ENCODE measurements at regions of chr6 and their contacts with region 1.

Region 1: GRCh38 chr6:43263314-43264178 is 20.3 kb downstream of the TTBK1 start:
- DNase-seq: peak; percentile 48
- H3K4me3 ChIP-seq: no peak overlapping the region
- H3K27ac ChIP-seq: no peak overlapping the region
- H3K4me1 ChIP-seq: no peaks in the 10 kb centered on the region
- H3K27me3 ChIP-seq: peaks cover 4 to 6% of the 10 kb centered on the region in 2 experiments
- CTCF ChIP-seq: peak; percentile 58 to 76
- POLR2A ChIP-seq: no peak

Region 2: GRCh38 chr6:43334466-43335095 is 71.0 kb after region 1 on chr6:
- CTCF ChIA-PET with region 1: interaction called, 49 read pairs
- POLR2A ChIA-PET with region 1: no interaction called
- dilution Hi-C with region 1: no loop called
- intact Hi-C with region 1: loop called (anchors 1 kb)
- DNase-seq: peak; percentile 66
- H3K4me3 ChIP-seq: no peak overlapping the region
- H3K27ac ChIP-seq: no peak overlapping the region
- H3K4me1 ChIP-seq: no peaks in the 10 kb centered on the region
- H3K27me3 ChIP-seq: no peaks in the 10 kb centered on the region
- CTCF ChIP-seq: peak; percentile 45 to 49
- POLR2A ChIP-seq: no peak

Region 3: GRCh38 chr6:43355862-43356590 is 92.5 kb after region 1 on chr6:
- CTCF ChIA-PET with region 1: interaction called, 10 read pairs
- POLR2A ChIA-PET with region 1: no interaction called
- dilution Hi-C with region 1: no loop called
- intact Hi-C with region 1: no loop called
- DNase-seq: peak; percentile 24
- H3K4me3 ChIP-seq: no peak overlapping the region
- H3K27ac ChIP-seq: no peak overlapping the region
- H3K4me1 ChIP-seq: peaks cover 7% of the 10 kb centered on the region
- H3K27me3 ChIP-seq: no peaks in the 10 kb centered on the region
- CTCF ChIP-seq: peak in 1 of 2 donors; percentile 23
- POLR2A ChIP-seq: no peak

Region 4: DNA sequence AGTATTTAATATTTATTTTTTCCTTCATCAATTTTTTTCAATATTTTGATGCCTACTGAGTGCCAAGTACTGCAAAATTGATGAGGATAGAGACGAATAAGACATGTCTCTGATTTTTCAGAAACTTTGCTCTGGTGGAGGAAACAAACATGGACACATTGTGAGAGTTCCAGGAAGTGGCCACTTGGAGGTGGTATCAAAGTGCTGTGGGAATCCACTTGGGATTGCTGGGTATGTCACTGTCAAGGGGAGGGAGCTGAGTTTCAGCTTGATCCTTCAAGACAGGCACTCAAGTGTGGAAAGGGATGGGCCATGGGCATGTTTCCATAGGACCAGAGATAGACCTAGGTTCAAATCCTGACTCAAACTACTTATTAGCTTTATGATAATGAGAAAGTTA is 139.3 kb after region 1 on chr6:
- CTCF ChIA-PET with region 1: interaction called, 36 read pairs
- POLR2A ChIA-PET with region 1: no interaction called
- dilution Hi-C with region 1: no loop called
- intact Hi-C with region 1: loop called (anchors 1 kb)
- DNase-seq: no peak
- H3K4me3 ChIP-seq: no peak overlapping the region
- H3K27ac ChIP-seq: no peak overlapping the region
- H3K4me1 ChIP-seq: no peaks in the 10 kb centered on the region
- H3K27me3 ChIP-seq: peaks cover 9% of the 10 kb centered on the region in 2 experiments
- CTCF ChIP-seq: no peak
- POLR2A ChIP-seq: no peak

Region 5: DNA sequence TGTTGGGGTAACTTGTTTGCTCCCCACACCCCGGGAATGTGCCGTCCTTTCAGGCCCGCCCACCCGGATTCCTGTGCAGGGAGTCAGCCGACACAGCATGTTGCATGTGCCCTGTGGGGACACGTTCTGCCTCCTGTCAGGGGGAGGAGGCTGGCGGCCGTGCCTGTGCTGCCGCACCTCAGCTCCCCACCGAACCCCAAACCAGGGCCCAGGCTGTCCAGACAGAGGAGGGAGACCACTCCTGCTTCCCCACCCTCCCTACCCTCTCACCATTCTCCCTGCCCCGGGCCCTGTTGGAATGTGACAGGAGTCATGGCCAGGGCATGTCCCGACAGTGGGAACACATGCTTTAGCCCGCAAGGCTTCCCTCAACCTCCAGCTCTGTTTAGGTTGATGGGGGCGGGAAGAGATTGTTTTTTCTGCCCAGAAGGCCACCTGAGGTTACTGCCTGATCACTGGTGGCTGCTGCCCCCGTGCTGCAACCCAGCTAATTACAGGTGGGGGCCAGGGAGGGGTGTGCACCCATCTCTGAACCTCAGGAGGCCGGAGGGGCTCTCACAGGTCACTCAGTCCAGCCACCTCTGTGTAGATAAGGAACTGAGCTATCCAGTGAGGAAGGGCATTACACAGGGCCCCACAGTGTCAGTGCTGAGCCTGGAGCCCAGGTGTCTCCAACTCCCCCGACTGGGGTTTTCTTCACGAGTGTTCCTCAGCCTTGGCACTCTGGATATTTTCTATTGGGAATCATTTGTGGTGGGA is 233.0 kb after region 1 on chr6:
- CTCF ChIA-PET with region 1: interaction called, 13 read pairs
- POLR2A ChIA-PET with region 1: no interaction called
- dilution Hi-C with region 1: no loop called
- intact Hi-C with region 1: no loop called
- DNase-seq: peak; percentile 27
- H3K4me3 ChIP-seq: no peak overlapping the region
- H3K27ac ChIP-seq: no peak overlapping the region
- H3K4me1 ChIP-seq: peaks cover 27% of the 10 kb centered on the region
- H3K27me3 ChIP-seq: no peaks in the 10 kb centered on the region
- CTCF ChIP-seq: peak; percentile 30 to 54
- POLR2A ChIP-seq: no peak